MCF 10A (cell line): ENCODE measurements at regions of chr2 and their contacts with region 1.

Region 1: GRCh38 chr2:215105608-215106354 is 32.6 kb downstream of the ABCA12 start:
- DNase-seq: peak; percentile 93
- H3K4me3 Mint-ChIP-seq: peak overlapping the region; percentile 30
- H3K27ac Mint-ChIP-seq: peak overlapping the region; percentile 84
- H3K4me1 Mint-ChIP-seq: peaks cover 41% of the 10 kb centered on the region
- H3K27me3 Mint-ChIP-seq: no peaks in the 10 kb centered on the region
- CTCF ChIP-seq: no peak

Region 2: GRCh38 chr2:215055891-215056290 is 49.9 kb before region 1 on chr2:
- CTCF ChIA-PET with region 1: interaction called, 3 read pairs
- POLR2A ChIA-PET with region 1: interaction called, 12 read pairs
- intact Hi-C with region 1: no loop called
- DNase-seq: no peak
- H3K4me3 Mint-ChIP-seq: no peak overlapping the region
- H3K27ac Mint-ChIP-seq: no peak overlapping the region
- H3K4me1 Mint-ChIP-seq: peaks cover 5% of the 10 kb centered on the region
- H3K27me3 Mint-ChIP-seq: no peaks in the 10 kb centered on the region
- CTCF ChIP-seq: no peak

Region 3: GRCh38 chr2:215071667-215072066 is 34.1 kb before region 1 on chr2:
- CTCF ChIA-PET with region 1: interaction called, 3 read pairs
- POLR2A ChIA-PET with region 1: interaction called, 11 read pairs
- intact Hi-C with region 1: loop called (anchors 1 kb)
- DNase-seq: peak; percentile 80
- H3K4me3 Mint-ChIP-seq: no peak overlapping the region
- H3K27ac Mint-ChIP-seq: peak overlapping the region; percentile 68
- H3K4me1 Mint-ChIP-seq: peaks cover 9% of the 10 kb centered on the region
- H3K27me3 Mint-ChIP-seq: no peaks in the 10 kb centered on the region
- CTCF ChIP-seq: no peak

Region 4: DNA sequence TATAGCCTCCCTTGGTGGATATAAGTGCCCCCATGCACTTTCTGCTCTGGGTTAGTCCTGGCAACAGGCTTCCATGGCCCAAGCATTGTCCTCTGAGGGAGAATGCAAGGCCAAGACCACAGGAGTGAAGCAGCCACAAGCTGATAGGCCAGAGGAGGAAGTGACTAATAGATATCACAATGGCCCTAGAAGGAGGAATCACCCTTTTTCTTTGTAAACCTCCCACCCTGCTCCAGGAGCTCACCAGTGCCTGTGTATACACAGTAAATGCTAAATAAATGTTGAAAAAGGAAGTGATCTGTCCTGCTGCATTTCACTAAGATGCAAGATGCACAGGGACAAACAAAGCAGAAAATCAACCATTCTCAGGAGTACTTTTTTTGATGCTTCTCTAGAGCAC is 82.3 kb after region 1 on chr2:
- CTCF ChIA-PET with region 1: interaction called, 3 read pairs
- POLR2A ChIA-PET with region 1: interaction called, 14 read pairs
- intact Hi-C with region 1: no loop called
- DNase-seq: no peak
- H3K4me3 Mint-ChIP-seq: no peak overlapping the region
- H3K27ac Mint-ChIP-seq: no peak overlapping the region
- H3K4me1 Mint-ChIP-seq: peaks cover 11% of the 10 kb centered on the region
- H3K27me3 Mint-ChIP-seq: no peaks in the 10 kb centered on the region
- CTCF ChIP-seq: no peak

Region 5: DNA sequence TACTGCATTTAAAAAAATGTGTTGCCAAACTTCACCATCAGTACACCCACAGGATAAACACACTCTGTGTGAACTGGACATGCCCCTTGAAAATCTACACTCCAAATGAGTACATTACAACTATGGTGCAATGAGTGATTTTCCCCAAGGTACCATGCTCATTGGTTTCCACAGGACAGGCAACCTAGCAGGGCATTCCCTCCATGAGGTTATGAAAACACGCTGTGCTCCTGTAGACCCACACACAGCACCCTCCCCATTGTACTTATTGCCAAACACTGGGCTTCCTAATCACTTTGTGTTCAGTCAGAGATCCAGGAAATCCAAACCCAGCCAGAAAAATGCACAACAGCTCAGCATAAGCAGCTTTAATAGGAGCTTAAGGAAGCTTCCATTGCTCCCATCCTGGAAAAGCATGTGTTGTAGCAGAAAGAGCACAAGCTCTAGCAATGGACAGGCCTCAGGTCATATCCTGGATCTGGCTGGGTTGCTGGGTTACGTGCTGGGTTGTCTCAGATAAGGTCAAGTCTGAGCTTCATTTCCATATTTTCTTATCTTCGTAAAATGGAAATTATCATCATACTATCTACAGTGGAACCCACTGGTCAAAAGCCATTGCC is 185.3 kb after region 1 on chr2:
- CTCF ChIA-PET with region 1: no interaction called
- POLR2A ChIA-PET with region 1: no interaction called
- intact Hi-C with region 1: no loop called
- DNase-seq: peak; percentile 62
- H3K4me3 Mint-ChIP-seq: no peak overlapping the region
- H3K27ac Mint-ChIP-seq: no peak overlapping the region
- H3K4me1 Mint-ChIP-seq: no peaks in the 10 kb centered on the region
- H3K27me3 Mint-ChIP-seq: no peaks in the 10 kb centered on the region
- CTCF ChIP-seq: no peak

Region 6: GRCh38 chr2:215418064-215418963 is 312.5 kb after region 1 on chr2:
- CTCF ChIA-PET with region 1: no interaction called
- POLR2A ChIA-PET with region 1: no interaction called
- intact Hi-C with region 1: no loop called
- DNase-seq: no peak
- H3K4me3 Mint-ChIP-seq: no peak overlapping the region
- H3K27ac Mint-ChIP-seq: peak overlapping the region; percentile 3
- H3K4me1 Mint-ChIP-seq: peaks cover 6% of the 10 kb centered on the region
- H3K27me3 Mint-ChIP-seq: no peaks in the 10 kb centered on the region
- CTCF ChIP-seq: no peak